ENCODE measurements at regions of chr5 and their contacts with region 1.

Region 1: DNA sequence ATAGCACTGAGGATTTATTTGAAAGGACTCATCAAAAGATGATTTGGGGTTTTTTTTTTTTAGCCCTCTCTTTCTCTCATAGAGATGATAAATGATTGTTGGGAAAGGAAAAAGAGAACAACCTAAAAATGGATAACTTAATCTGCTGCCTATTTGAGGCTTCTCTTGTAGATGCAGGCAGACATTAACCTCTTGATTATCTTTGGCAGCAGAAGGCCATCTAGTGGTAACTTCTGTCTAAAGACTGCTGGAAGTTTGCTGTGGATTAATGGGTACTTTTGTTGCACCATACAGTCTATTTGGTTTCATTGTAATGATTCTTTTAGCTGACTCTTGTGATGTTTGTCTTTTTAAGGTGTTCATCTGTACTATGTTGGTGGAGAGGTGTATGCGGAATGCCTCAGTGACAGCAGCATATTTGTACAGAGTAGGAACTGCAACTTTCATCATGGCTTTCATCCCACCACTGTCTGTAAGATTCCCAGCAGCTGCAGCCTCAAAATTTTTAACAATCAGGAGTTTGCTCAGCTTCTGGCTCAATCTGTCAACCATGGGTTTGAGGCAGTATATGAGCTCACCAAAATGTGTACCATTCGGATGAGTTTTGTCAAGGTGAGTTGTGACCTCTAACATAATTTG is 18.8 kb downstream of the SMIM32 start:
- DNase-seq: no peak
- ATAC-seq: peak; percentile 73

Region 2: DNA sequence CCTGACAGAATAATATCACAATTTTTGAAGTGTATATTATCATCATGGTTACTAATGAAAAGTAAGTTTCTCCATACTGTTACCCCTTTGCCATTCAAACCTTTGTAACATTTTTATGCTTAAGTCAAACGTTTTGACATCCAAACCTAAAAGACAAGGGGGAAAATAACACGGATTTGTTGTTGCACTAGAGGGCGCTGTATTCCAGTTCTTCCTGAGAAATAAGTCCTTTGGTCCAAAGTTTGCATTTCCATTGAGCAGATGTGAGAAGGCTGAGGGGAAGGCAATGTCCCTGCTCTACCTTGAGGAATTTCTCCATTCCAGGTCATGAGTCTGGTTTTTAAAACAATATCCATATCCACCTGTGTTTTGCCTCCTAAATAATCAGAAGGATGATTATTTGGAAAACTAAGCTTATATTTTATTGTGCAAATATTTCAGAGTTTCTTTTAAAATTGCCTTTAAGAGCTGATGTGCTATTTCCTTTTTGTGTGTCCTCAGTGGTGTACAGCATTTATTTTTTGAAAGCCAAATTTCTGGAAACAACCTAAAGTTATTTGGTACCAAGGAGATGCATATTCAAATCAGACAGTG is 229.1 kb before region 1 on chr5:
- intact Hi-C with region 1: loop called (anchors 5 kb)
- DNase-seq: no peak
- ATAC-seq: peak; percentile 74

Region 3: DNA sequence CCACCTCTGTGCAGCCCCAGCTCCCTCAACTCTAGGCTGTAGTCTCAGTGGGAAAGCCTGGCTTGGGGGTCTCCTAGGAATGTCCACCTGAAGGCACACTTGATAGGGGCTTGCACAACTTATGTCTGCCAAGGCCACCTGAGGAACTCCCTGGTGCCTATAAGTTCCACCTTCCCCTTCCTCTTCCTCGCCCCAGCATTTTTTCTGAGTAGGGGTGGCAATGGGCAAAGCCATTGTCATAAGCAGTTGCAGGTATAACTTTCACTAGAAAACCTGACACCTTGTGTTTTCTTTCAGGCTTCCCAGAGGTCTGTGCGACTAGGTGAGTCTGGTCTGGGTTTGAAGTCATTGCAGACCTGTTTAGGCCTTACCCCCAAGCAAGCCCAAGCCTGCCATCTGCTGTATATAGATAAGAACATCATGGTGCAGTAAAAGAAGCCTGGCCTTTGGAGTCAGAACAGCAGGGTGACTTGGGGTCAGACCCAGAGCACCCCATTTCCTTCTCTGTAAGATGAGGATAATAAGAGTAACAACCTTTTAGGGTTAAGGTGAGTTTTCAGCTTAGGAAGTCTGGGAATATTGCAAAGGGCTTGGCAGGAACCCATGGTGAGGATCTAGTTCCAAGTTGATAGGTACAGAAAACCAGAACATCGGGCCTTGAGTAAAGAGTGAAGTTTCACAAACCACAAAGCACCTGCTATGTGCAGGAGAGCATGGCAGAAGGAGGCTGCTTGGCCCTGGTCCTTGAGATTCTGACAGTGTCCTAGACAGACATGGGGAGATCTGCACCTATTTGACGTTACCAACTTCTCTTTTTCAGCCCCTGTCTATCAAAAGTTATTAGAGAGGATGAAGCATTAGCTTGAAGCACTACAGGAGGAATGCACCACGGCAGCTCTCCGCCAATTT is 111.5 kb before region 1 on chr5:
- intact Hi-C with region 1: loop called (anchors 10 kb)
- DNase-seq: no peak
- ATAC-seq: no peak

Measured in Right ventricle myocardium superior (tissue), 1 donor.